Right ventricle myocardium inferior (tissue), 1 donor: ENCODE measurements at regions of chr17 and their contacts with region 1.

Region 1: GRCh38 chr17:8073627-8074484 is 13.7 kb downstream of the ALOX12B start:
- DNase-seq: peak; percentile 87
- ATAC-seq: peak; percentile 59

Region 2: GRCh38 chr17:8041249-8041928 is 32.5 kb before region 1 on chr17:
- intact Hi-C with region 1: no loop called
- DNase-seq: no peak
- ATAC-seq: peak; percentile 79

Region 3: GRCh38 chr17:8109661-8110464 is 36.0 kb after region 1 on chr17:
- intact Hi-C with region 1: loop called (anchors 5 kb)
- DNase-seq: peak; percentile 88
- ATAC-seq: peak; percentile 56